ENCODE measurements at regions of chr3 and their contacts with region 1.

Region 1: GRCh38 chr3:46578973-46579755 is 13.1 kb upstream of the LRRC2 start:
- DNase-seq: no peak
- ATAC-seq: peak in 2 of 4 donors; percentile 46 to 61
- H3K4me3 ChIP-seq: no peak overlapping the region
- H3K27ac ChIP-seq: no peak overlapping the region
- H3K4me1 ChIP-seq: peaks cover 0 to 13% (median 3%) of the 10 kb centered on the region in 12 donors
- H3K27me3 ChIP-seq: peaks cover 0 to 18% (median 0%) of the 10 kb centered on the region in 9 donors
- CTCF ChIP-seq: no peak
- POLR2A ChIP-seq: no peak

Region 2: GRCh38 chr3:46422617-46423016 is 156.5 kb before region 1 on chr3:
- intact Hi-C with region 1: no loop called
- DNase-seq: no peak
- ATAC-seq: no peak
- H3K4me3 ChIP-seq: no peak overlapping the region
- H3K27ac ChIP-seq: no peak overlapping the region
- H3K4me1 ChIP-seq: peaks cover 0 to 9% (median 0%) of the 10 kb centered on the region in 12 donors
- H3K27me3 ChIP-seq: no peaks in the 10 kb centered on the region
- CTCF ChIP-seq: no peak
- POLR2A ChIP-seq: no peak

Region 3: DNA sequence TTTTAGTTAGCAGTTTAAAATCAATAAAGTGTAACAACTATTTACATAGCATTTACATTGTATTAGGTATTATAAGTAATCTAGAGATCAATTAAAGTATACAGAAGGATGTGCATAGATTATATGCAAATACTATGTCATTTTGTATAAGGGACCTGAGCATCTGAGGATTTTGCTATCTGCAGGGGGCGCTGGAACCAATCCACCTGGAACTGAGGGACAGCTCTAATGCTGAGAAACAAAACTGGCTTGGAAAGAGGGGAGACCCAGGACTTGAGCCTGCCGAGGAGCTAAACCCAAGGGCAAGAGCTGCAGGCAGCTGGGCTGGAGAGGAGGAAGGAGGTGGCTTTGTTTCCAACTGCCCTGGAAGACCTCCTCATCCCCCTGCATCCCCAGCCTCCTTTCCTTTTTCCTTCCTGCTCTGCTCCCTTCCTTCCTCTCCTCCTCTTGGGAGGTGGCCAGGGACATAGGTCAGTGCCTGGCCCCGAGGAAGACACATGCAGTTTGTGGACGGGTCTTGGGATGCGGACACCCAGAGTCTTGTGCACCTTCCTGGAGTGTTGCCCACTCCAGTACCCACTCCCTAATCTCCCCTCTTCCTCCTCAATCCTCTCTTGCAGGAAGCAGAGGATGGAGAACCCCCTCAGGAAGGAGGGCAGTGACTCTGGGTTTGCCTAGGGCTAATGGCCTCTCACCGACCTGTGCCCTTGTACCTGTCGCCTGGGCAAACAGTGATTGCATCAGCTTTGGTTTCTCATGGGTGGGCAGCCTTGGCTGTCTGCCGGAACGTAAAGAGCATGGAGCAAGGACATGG is 82.2 kb before region 1 on chr3:
- intact Hi-C with region 1: no loop called
- DNase-seq: no peak
- ATAC-seq: peak in 1 of 4 donors; percentile 12
- H3K4me3 ChIP-seq: no peak overlapping the region
- H3K27ac ChIP-seq: no peak overlapping the region
- H3K4me1 ChIP-seq: peaks cover 0 to 25% (median 5%) of the 10 kb centered on the region in 12 donors
- H3K27me3 ChIP-seq: no peaks in the 10 kb centered on the region
- CTCF ChIP-seq: peak in 8 of 12 donors; percentile 8 to 38 (median 24)
- POLR2A ChIP-seq: no peak

Region 4: DNA sequence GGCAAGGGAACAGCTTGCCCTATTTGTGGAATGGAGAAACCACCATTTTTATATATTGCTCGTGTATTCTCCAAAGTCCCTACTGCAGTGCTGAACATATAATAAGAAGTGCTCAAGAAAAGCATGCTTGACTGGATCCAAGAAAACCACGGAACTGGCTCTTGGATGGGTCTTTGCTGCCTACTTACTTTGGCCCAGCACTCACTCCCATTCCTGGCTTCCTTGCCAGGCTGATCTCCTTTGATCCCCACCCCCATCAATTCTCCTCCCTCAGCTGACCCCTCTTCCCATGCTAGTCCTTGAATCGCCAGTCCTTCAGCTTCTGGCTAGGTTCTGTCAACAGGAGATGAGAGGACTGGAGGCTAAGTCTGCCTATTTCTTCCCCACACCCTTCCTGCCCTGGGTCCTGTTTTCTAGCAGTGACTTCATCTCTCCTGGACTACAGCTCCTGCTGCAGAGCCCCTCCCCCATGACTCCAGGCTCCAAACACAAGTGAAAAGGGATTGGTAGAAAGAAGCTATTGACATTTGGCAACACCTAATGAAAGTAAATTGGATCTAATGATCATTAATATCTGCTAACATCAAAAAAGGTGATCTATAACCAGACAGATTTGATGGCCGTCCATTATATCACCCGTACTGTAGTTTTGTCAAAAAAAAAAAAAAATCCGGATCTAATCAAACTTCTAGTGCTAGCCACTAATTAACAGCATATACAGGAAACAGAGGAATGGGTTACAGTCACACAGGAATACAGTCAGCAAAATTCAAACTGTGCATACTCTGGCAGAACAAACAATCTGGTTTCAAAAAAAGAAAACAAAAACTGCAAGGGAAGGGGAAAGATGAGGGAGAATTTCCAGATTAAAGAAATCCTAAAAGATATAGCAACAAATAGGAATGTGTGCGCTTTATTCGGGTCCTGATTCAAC is 40.9 kb after region 1 on chr3:
- intact Hi-C with region 1: loop called in 4 of 10 experiments (anchors 2 to 10 kb)
- DNase-seq: peak in 1 of 5 donors; percentile 30
- ATAC-seq: peak in 2 of 4 donors; percentile 34 to 37
- H3K4me3 ChIP-seq: no peak overlapping the region
- H3K27ac ChIP-seq: no peak overlapping the region
- H3K4me1 ChIP-seq: no peaks in the 10 kb centered on the region
- H3K27me3 ChIP-seq: peaks cover 0 to 9% (median 0%) of the 10 kb centered on the region in 9 donors
- CTCF ChIP-seq: no peak
- POLR2A ChIP-seq: no peak

Measured in heart left ventricle (tissue), 16 donors.